Naive thymus-derived CD4-positive, alpha-beta T cell (primary cell): ENCODE measurements at regions of chr17 and their contacts with region 1.

Region 1: GRCh38 chr17:3762922-3763776 is 37.8 kb downstream of the ITGAE start:
- DNase-seq: no peak
- ATAC-seq: peak; percentile 64
- H3K4me3 ChIP-seq: peak overlapping the region; percentile 24
- H3K4me3 Mint-ChIP-seq: peak overlapping the region in 3 of 10 donors; percentile 22 to 82 (median 53)
- H3K27ac ChIP-seq: no peak overlapping the region
- H3K27ac Mint-ChIP-seq: peak overlapping the region in 5 of 9 donors; percentile 48 to 95 (median 67)
- H3K4me1 ChIP-seq: peaks cover 14 to 45% of the 10 kb centered on the region in 2 donors
- H3K4me1 Mint-ChIP-seq: peaks cover 17 to 51% (median 32%) of the 10 kb centered on the region in 7 donors
- H3K27me3 ChIP-seq: no peaks in the 10 kb centered on the region
- H3K27me3 Mint-ChIP-seq: no peaks in the 10 kb centered on the region

Region 2: GRCh38 chr17:3796110-3796821 is 33.1 kb after region 1 on chr17:
- CTCF ChIA-PET with region 1: no interaction called
- POLR2A ChIA-PET with region 1: no interaction called
- intact Hi-C with region 1: loop called in 1 of 2 experiments (anchors 5 kb)
- DNase-seq: peak in 1 of 9 donors; percentile 41
- ATAC-seq: peak; percentile 79
- H3K4me3 ChIP-seq: no peak overlapping the region
- H3K4me3 Mint-ChIP-seq: peak overlapping the region in 1 of 10 donors; percentile 46
- H3K27ac ChIP-seq: no peak overlapping the region
- H3K27ac Mint-ChIP-seq: peak overlapping the region in 3 of 9 donors; percentile 23 to 49 (median 24)
- H3K4me1 ChIP-seq: peaks cover 0 to 29% of the 10 kb centered on the region in 2 donors
- H3K4me1 Mint-ChIP-seq: peaks cover 0 to 30% (median 7%) of the 10 kb centered on the region in 7 donors
- H3K27me3 ChIP-seq: no peaks in the 10 kb centered on the region
- H3K27me3 Mint-ChIP-seq: no peaks in the 10 kb centered on the region